ENCODE measurements at regions of chr13 and their contacts with region 1.

Region 1: DNA sequence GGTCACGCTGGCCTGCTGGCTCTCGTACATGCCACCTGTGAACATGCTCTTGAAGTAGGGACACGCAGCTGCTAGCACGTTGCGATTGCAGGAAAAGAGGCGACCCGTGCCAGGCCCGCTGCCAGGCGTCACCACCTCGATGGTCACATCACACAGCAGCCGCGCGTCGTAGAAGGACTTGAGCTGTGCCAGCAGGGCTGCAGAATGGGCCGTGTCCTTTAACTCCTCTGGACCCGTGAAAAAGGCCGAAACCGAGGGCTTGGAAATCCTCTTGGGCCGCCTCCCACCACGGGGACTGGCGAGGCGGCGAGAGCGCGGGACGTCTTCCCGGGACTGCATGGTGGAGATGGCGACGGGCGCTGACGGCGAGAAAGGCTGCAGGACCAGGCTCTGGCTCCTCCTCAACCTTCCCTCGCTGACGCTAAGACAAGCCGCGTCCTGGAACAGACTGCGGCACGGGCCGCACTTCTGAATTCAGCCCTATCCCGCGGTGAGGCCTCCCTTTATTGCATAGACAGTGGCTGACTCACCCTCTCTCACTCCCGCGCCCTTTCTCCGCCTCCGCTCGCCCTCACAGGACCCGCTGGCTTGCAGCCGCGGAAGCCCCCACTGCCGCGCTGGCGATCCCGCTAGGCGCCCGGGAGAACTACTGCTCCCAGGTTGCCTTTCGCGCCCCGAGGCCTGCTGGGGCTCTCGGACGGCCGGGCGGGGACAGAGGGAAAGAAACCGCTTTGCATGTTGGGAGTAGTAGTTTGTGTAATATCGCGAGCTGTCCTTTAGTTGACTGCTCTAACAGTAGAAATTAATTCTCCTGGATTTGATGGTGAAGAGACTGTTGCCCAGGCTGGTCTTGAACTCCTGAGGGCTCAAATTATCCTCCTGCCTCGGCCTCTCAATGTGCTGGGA is at the start of gene KBTBD7:
- DNase-seq: peak; percentile 97
- ATAC-seq: peak; percentile 99 to 100
- H3K4me3 ChIP-seq: peak within 1 kb of the TSS; percentile 66
- H3K27ac ChIP-seq: peak within 1 kb of the TSS; percentile 87
- H3K4me1 ChIP-seq: peaks cover 10% of the 10 kb centered on the region
- H3K27me3 ChIP-seq: no peaks in the 10 kb centered on the region
- total RNA-seq, gene KBTBD7: 5.6 to 9.5 (median 8.9) TPM

Region 2: GRCh38 chr13:41132512-41133152 is 61.5 kb before region 1 on chr13 and contains the start of gene KBTBD6:
- intact Hi-C with region 1: loop called (anchors 5 to 10 kb)
- DNase-seq: peak; percentile 97 to 98 (median 98)
- ATAC-seq: peak; percentile 99
- H3K4me3 ChIP-seq: peak within 1 kb of the TSS; percentile 67
- H3K27ac ChIP-seq: peak within 1 kb of the TSS; percentile 85
- H3K4me1 ChIP-seq: peaks cover 9% of the 10 kb centered on the region
- H3K27me3 ChIP-seq: no peaks in the 10 kb centered on the region
- total RNA-seq, gene KBTBD6: 8.7 to 15.7 (median 14.2) TPM

Region 3: DNA sequence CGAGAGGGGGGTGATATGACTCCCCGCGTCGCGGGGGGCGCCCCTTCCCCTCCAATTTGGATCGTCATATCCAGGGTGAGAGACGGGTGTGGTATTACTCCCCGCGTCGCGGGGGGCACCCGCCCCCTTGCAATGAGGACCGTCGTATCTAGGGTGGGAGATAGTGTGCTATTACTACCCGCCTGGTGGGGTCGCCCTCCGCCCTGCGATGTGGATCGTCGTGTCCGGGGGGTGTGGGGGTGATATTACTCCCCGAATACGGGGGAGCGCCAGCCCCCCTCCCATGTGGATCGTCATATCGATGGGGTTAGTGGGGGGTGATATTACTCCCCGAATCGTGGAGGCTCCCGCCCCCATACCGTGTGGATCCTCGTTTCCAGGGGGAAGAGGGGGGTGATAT is 234.0 kb after region 1 on chr13:
- intact Hi-C with region 1: no loop called
- DNase-seq: no peak
- ATAC-seq: peak in 1 of 2 donors; percentile 42
- H3K4me3 ChIP-seq: peak overlapping the region; percentile 26
- H3K27ac ChIP-seq: no peak overlapping the region
- H3K4me1 ChIP-seq: no peaks in the 10 kb centered on the region
- H3K27me3 ChIP-seq: no peaks in the 10 kb centered on the region

Measured in right cardiac atrium (tissue), 5 donors.